ENCODE measurements at regions of chr16 and their contacts with region 1.

Region 1: DNA sequence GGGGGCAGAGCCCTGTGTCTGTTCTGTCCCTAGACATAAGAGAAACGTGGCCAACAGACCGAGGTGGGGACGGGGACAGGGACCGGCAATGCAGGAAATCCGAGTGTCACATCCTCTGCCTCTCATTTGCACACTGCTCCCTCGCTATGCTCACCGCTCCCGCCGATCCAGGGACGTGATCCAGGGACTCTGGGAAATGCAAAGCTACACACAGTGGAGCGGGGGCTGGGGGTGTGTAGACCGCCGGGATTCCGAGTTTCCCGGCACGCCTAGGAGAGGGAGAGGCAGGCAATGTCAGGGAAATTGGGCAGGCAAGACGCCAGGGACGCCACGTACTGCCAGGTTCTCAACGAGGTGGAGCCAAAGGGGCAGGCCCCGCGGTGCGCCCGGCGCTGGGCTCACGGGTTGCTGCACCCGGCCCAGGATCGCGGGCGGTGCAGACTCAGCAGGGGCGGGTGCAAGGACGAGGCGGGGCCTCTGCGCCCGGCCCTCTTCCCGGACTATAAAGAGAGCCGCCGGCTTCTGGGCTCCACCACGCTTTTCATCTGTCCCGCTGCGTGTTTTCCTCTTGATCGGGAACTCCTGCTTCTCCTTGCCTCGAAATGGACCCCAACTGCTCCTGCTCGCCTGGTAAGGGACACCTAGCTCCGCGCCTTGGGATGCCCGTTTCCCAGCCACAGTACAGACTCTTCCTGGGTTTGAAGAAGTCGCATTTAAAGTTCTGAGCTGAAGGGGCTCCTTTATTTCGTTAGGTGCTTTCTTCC is at the start of gene MT1X:
- DNase-seq: peak; percentile 75
- H3K4me3 ChIP-seq: peak within 1 kb of the TSS; percentile 25 to 63 (median 37)
- H3K27ac ChIP-seq: peak within 1 kb of the TSS; percentile 19
- H3K4me1 ChIP-seq: peaks cover 10% of the 10 kb centered on the region
- H3K27me3 ChIP-seq: peaks cover 0 to 3% of the 10 kb centered on the region in 2 experiments
- CTCF ChIP-seq: no peak
- POLR2A ChIP-seq: peak; percentile 95
- total RNA-seq, gene MT1X: 15.6 and 19.2 TPM in 2 replicates

Region 2: DNA sequence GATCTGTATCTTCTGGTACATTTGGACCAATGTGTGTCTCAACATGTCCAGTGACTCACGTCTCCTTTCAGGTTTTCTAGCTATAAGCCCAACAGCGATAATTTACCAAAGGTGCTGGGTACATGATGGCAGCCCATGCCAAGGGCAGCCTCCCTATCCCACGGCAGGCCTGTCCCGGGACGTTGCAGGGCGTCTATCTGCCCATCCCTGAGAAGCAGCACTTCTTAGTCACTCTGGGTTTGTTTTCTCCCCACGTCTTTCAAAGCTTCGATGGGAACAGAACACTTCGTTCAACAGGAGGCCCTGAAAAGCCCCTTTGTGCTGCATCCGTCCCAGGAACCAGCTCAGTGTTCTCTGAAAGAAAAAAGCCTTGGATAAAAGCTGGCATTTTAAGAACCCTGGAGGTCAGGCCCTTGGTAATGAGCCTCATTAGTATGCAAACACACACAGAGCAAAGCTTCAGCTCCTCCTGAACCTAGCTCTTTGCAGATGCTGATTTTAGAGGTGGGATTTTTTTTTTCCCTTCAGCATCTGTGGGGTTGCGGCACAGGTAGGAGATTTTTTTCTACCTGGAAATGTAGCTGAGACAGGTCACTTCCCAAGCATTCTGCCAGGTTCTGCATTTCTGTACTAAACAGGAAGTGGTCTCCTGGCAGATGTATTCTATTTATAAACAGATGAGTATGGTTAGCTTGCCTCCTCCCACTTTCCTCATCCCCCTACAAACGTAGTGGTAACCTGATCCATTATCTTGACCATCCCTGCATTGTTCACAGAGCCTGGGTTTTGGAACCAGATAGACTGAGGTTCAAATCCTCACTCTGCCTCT is 134.8 kb before region 1 on chr16:
- CTCF ChIA-PET with region 1: no interaction called
- POLR2A ChIA-PET with region 1: no interaction called
- dilution Hi-C with region 1: no loop called
- intact Hi-C with region 1: no loop called
- DNase-seq: no peak
- H3K4me3 ChIP-seq: no peak overlapping the region
- H3K27ac ChIP-seq: no peak overlapping the region
- H3K4me1 ChIP-seq: peaks cover 4% of the 10 kb centered on the region
- H3K27me3 ChIP-seq: peaks cover 7% of the 10 kb centered on the region in 2 experiments
- CTCF ChIP-seq: no peak
- POLR2A ChIP-seq: no peak

Region 3: GRCh38 chr16:56625140-56625942 is 56.8 kb before region 1 on chr16 and contains the start of gene MT1E:
- CTCF ChIA-PET with region 1: no interaction called
- POLR2A ChIA-PET with region 1: interaction called, 3 read pairs
- dilution Hi-C with region 1: no loop called
- intact Hi-C with region 1: loop called (anchors 1 kb)
- DNase-seq: peak; percentile 54
- H3K4me3 ChIP-seq: peak within 1 kb of the TSS; percentile 21 to 74 (median 64)
- H3K27ac ChIP-seq: peak within 1 kb of the TSS; percentile 61
- H3K4me1 ChIP-seq: peaks cover 12% of the 10 kb centered on the region
- H3K27me3 ChIP-seq: no peaks in the 10 kb centered on the region
- CTCF ChIP-seq: no peak
- POLR2A ChIP-seq: peak; percentile 99
- total RNA-seq, gene MT1E: 201 and 346 TPM in 2 replicates